A673 (cell line): ENCODE measurements at regions of chr19 and their contacts with region 1.

Region 1: GRCh38 chr19:45643024-45643926 is 4.1 kb upstream of the EML2 start:
- DNase-seq: peak; percentile 92
- H3K4me3 ChIP-seq: peak overlapping the region; percentile 9
- H3K27ac ChIP-seq: no peak overlapping the region
- H3K4me1 ChIP-seq: peaks cover 22% of the 10 kb centered on the region
- H3K27me3 ChIP-seq: no peaks in the 10 kb centered on the region
- CTCF ChIP-seq: peak; percentile 99

Region 2: DNA sequence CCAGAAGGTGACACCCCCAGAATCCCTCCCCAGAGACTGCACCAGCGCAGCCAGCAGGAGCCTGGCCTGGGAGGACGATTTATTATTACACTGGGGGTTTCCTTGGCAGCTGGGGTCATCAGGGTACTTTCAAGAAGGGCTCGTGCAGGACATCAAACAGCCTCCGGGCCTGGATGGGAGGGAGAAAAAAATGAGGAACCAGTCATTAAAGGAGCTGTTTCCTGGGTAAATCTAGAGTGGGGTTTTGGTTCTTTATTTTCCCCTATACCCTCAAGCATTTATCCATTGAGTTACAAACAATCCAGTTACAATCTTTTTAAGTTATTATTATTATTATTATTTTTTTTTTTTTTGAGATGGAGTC is 233.7 kb before region 1 on chr19:
- CTCF ChIA-PET with region 1: interaction called, 10 read pairs
- POLR2A ChIA-PET with region 1: no interaction called
- intact Hi-C with region 1: no loop called
- DNase-seq: no peak
- H3K4me3 ChIP-seq: no peak overlapping the region
- H3K27ac ChIP-seq: no peak overlapping the region
- H3K4me1 ChIP-seq: no peaks in the 10 kb centered on the region
- H3K27me3 ChIP-seq: no peaks in the 10 kb centered on the region
- CTCF ChIP-seq: no peak

Region 3: DNA sequence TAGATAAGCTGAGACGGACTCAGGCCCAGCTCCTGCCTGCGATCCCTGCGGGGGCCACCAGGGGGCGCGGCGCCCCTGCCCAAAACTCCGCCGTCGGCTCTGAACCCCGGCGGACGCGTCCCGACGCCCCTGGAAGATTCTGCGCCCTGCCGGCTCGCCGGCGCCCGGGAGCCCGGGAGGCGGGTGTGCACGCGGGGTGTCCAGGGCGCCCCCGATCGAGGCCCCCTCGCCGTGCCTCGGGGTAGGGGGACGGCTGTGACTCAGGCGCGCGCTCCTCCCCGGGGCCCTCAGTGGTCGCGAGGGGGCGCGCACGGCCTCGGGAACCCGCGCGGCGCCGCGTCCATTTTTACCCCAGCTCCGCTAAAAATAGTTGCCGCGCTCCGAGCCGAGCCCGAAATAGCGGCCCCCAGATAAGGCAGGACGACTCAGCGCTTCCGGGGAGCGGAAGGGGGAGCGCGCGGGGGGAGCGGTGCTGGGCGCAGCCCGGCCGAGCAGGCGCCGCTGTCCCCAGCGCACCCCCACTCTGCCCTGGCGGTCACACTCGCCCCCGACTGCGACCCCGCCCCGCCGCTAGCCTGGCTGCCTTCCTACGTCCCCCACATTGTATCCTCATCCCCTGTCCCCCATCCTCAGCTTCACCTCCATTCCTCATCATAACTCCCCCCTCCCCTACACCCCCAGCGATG is 203.6 kb before region 1 on chr19:
- CTCF ChIA-PET with region 1: interaction called, 15 read pairs
- POLR2A ChIA-PET with region 1: no interaction called
- intact Hi-C with region 1: no loop called
- DNase-seq: peak; percentile 87
- H3K4me3 ChIP-seq: peak overlapping the region; percentile 82
- H3K27ac ChIP-seq: peak overlapping the region; percentile 93
- H3K4me1 ChIP-seq: peaks cover 18% of the 10 kb centered on the region
- H3K27me3 ChIP-seq: no peaks in the 10 kb centered on the region
- CTCF ChIP-seq: peak; percentile 94

Region 4: DNA sequence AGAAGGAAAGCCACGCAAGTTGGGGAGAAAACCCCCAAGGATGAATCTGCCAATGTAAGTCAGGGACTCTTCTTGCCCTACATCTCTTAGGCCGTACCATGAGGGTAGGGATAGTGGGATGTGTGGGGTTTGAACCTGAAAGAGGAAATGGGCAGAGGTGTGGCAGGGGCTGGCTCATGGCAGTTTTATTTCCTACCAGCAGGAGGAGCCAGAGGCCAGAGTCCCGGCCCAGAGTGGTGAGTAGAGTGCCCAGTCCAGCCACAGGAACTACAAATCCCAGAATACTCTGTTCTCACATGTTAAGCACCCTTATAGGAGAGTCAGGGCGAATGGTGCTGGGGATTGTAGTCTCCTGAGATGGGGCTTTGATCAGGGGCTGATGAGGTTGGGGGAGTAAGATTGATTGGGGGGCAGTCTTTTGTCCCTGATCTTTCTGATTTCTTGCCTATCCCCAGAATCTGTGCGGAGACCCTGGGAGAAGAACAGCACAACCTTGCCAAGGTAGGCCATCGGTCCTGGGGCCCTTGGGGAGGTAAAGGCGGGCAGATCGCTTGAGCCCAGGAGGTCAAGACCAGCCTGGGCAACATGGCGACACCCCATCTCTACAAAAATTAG is 119.5 kb before region 1 on chr19:
- CTCF ChIA-PET with region 1: interaction called, 15 read pairs
- POLR2A ChIA-PET with region 1: no interaction called
- intact Hi-C with region 1: loop called (anchors 1 kb)
- DNase-seq: peak; percentile 93
- H3K4me3 ChIP-seq: no peak overlapping the region
- H3K27ac ChIP-seq: no peak overlapping the region
- H3K4me1 ChIP-seq: peaks cover 6% of the 10 kb centered on the region
- H3K27me3 ChIP-seq: no peaks in the 10 kb centered on the region
- CTCF ChIP-seq: peak; percentile 92

Region 5: DNA sequence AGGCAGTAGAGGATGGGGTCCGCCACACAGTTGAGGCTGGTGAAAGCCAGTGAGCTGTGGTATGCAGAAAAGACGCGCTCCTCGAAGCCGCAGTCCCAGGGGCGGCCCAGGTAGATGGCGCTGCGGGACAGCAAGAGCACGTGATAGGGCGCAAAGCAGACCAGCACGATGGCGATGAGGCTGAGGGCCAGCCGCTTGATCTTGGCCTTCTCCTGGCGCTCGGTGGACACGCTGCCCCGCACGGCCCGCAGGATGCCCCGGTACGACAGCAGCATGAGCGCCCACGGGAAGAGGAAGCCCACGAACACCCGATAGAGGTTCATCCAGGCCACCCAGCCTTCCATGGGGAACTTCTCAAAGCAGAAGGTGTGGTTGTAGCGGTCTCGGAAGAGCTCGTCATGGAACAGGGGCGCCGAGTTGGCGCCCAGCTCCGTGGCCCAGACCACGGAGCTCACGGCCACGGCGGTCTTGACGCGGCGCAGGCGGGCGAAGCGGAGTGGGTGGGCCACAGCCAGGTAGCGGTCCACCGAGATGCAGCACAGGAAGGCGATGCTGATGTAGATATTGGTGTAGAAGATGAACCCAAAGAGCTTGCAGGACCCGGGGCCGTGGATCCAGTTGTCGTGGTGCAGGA is 52.2 kb before region 1 on chr19:
- CTCF ChIA-PET with region 1: interaction called, 6 read pairs
- POLR2A ChIA-PET with region 1: no interaction called
- intact Hi-C with region 1: loop called (anchors 2 kb)
- DNase-seq: peak; percentile 54
- H3K4me3 ChIP-seq: no peak overlapping the region
- H3K27ac ChIP-seq: no peak overlapping the region
- H3K4me1 ChIP-seq: no peaks in the 10 kb centered on the region
- H3K27me3 ChIP-seq: no peaks in the 10 kb centered on the region
- CTCF ChIP-seq: peak; percentile 70

Region 6: GRCh38 chr19:45630493-45630919 is 12.8 kb before region 1 on chr19:
- CTCF ChIA-PET with region 1: interaction called, 11 read pairs
- POLR2A ChIA-PET with region 1: interaction called, 12 read pairs
- intact Hi-C with region 1: no loop called
- DNase-seq: peak; percentile 91
- H3K4me3 ChIP-seq: no peak overlapping the region
- H3K27ac ChIP-seq: no peak overlapping the region
- H3K4me1 ChIP-seq: peaks cover 8% of the 10 kb centered on the region
- H3K27me3 ChIP-seq: no peaks in the 10 kb centered on the region
- CTCF ChIP-seq: no peak